ENCODE measurements at regions of chr11 and their contacts with region 1.

Region 1: GRCh38 chr11:130002846-130003716 is 446 bp upstream of the PRDM10 start:
- DNase-seq: peak; percentile 95
- ATAC-seq: peak; percentile 85
- H3K4me3 ChIP-seq: peak overlapping the region; percentile 84
- H3K27ac ChIP-seq: peak overlapping the region; percentile 100
- H3K4me1 ChIP-seq: 0 out of 2 replicates have a peak, but pooled peaks cover 6% of the 10 kb centered on the region
- H3K27me3 ChIP-seq: no peaks in the 10 kb centered on the region
- CTCF ChIP-seq: no peak
- EP300 ChIP-seq: peak; percentile 35 to 36; a peak in 2 of 4 replicates
- POLR2A ChIP-seq: peak; percentile 90
- RAD21 ChIP-seq: no peak

Region 2: GRCh38 chr11:129273944-129274711 is 729.0 kb before region 1 on chr11:
- CTCF ChIA-PET with region 1: no interaction called
- POLR2A ChIA-PET with region 1: no interaction called
- RAD21 ChIA-PET with region 1: no interaction called
- SMC1A ChIA-PET with region 1: no interaction called
- in situ Hi-C with region 1: no loop called
- intact Hi-C with region 1: loop called (anchors 5 kb)
- DNase-seq: no peak
- ATAC-seq: peak; percentile 61
- H3K4me3 ChIP-seq: no peak overlapping the region
- H3K27ac ChIP-seq: no peak overlapping the region
- H3K4me1 ChIP-seq: no peaks in the 10 kb centered on the region
- H3K27me3 ChIP-seq: no peaks in the 10 kb centered on the region
- CTCF ChIP-seq: no peak
- EP300 ChIP-seq: no peak
- POLR2A ChIP-seq: no peak
- RAD21 ChIP-seq: no peak

Region 3: DNA sequence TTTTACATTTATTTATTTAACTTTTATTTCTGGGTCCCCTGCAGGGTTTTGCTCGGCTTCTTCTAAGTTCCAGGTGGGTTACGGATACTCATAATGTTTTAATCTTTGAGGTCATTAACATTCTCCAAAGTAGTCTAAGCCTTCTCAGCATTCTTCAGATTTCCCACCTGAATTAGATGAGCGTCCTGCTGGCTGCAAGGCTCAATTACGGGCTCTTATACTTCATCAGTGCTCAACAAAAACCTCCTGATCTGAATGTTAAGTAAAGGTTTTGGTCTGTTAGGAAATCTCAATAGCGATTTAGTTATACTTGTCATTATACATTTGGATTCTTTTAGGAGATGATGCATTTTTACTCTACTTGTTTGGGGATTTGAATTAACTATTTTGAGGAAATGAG is 80.4 kb before region 1 on chr11:
- CTCF ChIA-PET with region 1: interaction called, 9 read pairs
- POLR2A ChIA-PET with region 1: interaction called, 4 read pairs
- RAD21 ChIA-PET with region 1: interaction called, 4 read pairs
- SMC1A ChIA-PET with region 1: interaction called, 7 read pairs
- in situ Hi-C with region 1: no loop called
- intact Hi-C with region 1: loop called (anchors 5 kb)
- DNase-seq: no peak
- ATAC-seq: no peak
- H3K4me3 ChIP-seq: no peak overlapping the region
- H3K27ac ChIP-seq: no peak overlapping the region
- H3K4me1 ChIP-seq: no peaks in the 10 kb centered on the region
- H3K27me3 ChIP-seq: no peaks in the 10 kb centered on the region
- CTCF ChIP-seq: no peak
- EP300 ChIP-seq: no peak
- POLR2A ChIP-seq: no peak
- RAD21 ChIP-seq: no peak

Region 4: DNA sequence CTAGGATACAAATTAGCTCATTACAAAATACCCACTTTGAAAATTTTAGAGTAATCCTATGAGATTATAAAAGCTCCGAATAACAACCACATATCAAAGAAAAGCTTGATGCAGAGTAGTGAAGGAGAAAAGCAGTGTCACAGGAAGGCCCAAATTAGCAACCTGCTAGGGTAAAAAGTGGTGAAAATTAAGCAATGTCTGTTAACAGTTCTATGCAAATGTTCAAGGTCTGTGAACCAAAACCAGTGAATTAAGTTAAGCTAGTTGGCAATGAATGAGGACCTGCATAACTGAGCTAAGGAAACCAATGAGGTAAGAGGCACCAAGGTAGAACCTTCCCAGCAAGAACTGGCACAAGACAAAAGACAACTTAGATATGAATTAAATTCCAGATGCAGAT is 30.0 kb before region 1 on chr11:
- CTCF ChIA-PET with region 1: interaction called, 9 read pairs
- POLR2A ChIA-PET with region 1: interaction called, 10 read pairs
- RAD21 ChIA-PET with region 1: interaction called, 14 read pairs
- SMC1A ChIA-PET with region 1: interaction called, 18 read pairs
- in situ Hi-C with region 1: no loop called
- intact Hi-C with region 1: no loop called
- DNase-seq: no peak
- ATAC-seq: peak; percentile 73
- H3K4me3 ChIP-seq: no peak overlapping the region
- H3K27ac ChIP-seq: no peak overlapping the region; the same call in 1 of the 2 replicates
- H3K4me1 ChIP-seq: peaks cover 6% of the 10 kb centered on the region; the same call in 1 of the 2 replicates
- H3K27me3 ChIP-seq: no peaks in the 10 kb centered on the region
- CTCF ChIP-seq: no peak
- EP300 ChIP-seq: no peak
- POLR2A ChIP-seq: no peak
- RAD21 ChIP-seq: no peak

Region 5: GRCh38 chr11:130022798-130023583 is 19.9 kb after region 1 on chr11:
- CTCF ChIA-PET with region 1: no interaction called
- POLR2A ChIA-PET with region 1: no interaction called
- RAD21 ChIA-PET with region 1: no interaction called
- SMC1A ChIA-PET with region 1: no interaction called
- in situ Hi-C with region 1: no loop called
- intact Hi-C with region 1: loop called (anchors 1 kb)
- DNase-seq: peak; percentile 88
- ATAC-seq: peak; percentile 98
- H3K4me3 ChIP-seq: no peak overlapping the region
- H3K27ac ChIP-seq: no peak overlapping the region
- H3K4me1 ChIP-seq: peaks cover 5% of the 10 kb centered on the region
- H3K27me3 ChIP-seq: peaks cover 0 to 1% of the 10 kb centered on the region in 2 experiments; a peak in 2 of 4 replicates
- CTCF ChIP-seq: no peak
- EP300 ChIP-seq: no peak
- POLR2A ChIP-seq: no peak
- RAD21 ChIP-seq: no peak

Region 6: DNA sequence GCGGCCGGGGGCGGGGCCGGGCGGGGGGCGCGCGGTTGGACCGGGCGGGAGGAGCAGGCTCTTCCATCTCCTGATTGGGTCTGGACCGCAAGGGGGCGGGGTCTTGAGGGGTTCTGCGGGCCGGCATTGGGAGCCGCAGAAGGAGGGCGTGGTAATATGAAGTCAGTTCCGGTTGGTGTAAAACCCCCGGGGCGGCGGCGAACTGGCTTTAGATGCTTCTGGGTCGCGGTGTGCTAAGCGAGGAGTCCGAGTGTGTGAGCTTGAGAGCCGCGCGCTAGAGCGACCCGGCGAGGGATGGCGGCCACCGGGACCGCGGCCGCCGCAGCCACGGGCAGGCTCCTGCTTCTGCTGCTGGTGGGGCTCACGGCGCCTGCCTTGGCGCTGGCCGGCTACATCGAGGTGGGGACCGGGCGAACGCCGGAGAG is 66.6 kb after region 1 on chr11 and contains the start of gene APLP2:
- CTCF ChIA-PET with region 1: interaction called, 4 read pairs
- POLR2A ChIA-PET with region 1: interaction called, 11 read pairs
- RAD21 ChIA-PET with region 1: interaction called, 10 read pairs
- SMC1A ChIA-PET with region 1: interaction called, 8 read pairs
- in situ Hi-C with region 1: no loop called
- intact Hi-C with region 1: loop called (anchors 1 kb)
- DNase-seq: peak; percentile 75
- ATAC-seq: peak; percentile 93
- H3K4me3 ChIP-seq: peak within 1 kb of the TSS; percentile 76
- H3K27ac ChIP-seq: no peak within 1 kb of the TSS
- H3K4me1 ChIP-seq: no peaks in the 10 kb centered on the region
- H3K27me3 ChIP-seq: peaks cover 0 to 4% of the 10 kb centered on the region in 2 experiments; a peak in 1 of 4 replicates
- CTCF ChIP-seq: no peak
- EP300 ChIP-seq: no peak
- POLR2A ChIP-seq: peak; percentile 97
- RAD21 ChIP-seq: no peak
- polyA plus RNA-seq, gene APLP2: 2.3 to 4.6 TPM

Region 7: GRCh38 chr11:130118636-130119387 is 115.7 kb after region 1 on chr11:
- CTCF ChIA-PET with region 1: interaction called, 4 read pairs
- POLR2A ChIA-PET with region 1: no interaction called
- RAD21 ChIA-PET with region 1: interaction called, 7 read pairs
- SMC1A ChIA-PET with region 1: interaction called, 4 read pairs
- in situ Hi-C with region 1: no loop called
- intact Hi-C with region 1: loop called (anchors 5 kb)
- DNase-seq: peak; percentile 38
- ATAC-seq: peak; percentile 79
- H3K4me3 ChIP-seq: peak overlapping the region; percentile 29; the same call in 1 of the 2 replicates
- H3K27ac ChIP-seq: peak overlapping the region; percentile 40; the same call in 1 of the 2 replicates
- H3K4me1 ChIP-seq: peaks cover 20% of the 10 kb centered on the region
- H3K27me3 ChIP-seq: no peaks in the 10 kb centered on the region
- CTCF ChIP-seq: no peak
- EP300 ChIP-seq: no peak
- POLR2A ChIP-seq: no peak
- RAD21 ChIP-seq: no peak

Region 8: DNA sequence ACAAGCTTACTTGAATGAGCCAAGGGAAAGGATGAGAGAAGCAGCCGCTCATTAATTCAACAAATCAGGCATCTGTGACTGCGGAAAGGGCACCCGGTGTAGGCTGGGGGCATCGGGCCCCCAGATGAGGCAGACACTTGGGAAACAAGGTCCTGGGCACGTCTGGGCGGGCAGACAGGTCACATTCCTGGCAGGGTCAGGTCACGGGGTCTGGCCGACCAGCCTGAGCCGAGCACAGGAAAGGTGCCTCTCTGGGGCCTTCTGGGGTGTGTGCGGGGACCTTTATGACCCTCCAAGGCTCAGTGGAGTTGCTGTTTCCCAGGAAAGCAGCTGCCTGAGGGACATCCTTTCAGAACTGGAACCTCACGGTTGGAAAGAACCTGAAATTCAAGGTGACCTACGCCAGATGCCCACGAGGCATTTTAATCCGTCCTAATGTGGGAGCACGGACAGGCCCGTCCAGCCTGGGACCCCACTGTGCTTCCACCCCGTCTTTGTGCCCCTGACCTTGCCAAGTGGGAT is 213.6 kb after region 1 on chr11:
- CTCF ChIA-PET with region 1: no interaction called
- POLR2A ChIA-PET with region 1: no interaction called
- RAD21 ChIA-PET with region 1: no interaction called
- SMC1A ChIA-PET with region 1: no interaction called
- in situ Hi-C with region 1: no loop called
- intact Hi-C with region 1: no loop called
- DNase-seq: no peak
- ATAC-seq: no peak
- H3K4me3 ChIP-seq: no peak overlapping the region
- H3K27ac ChIP-seq: no peak overlapping the region
- H3K4me1 ChIP-seq: no peaks in the 10 kb centered on the region
- H3K27me3 ChIP-seq: no peaks in the 10 kb centered on the region
- CTCF ChIP-seq: no peak
- EP300 ChIP-seq: no peak
- POLR2A ChIP-seq: no peak
- RAD21 ChIP-seq: no peak

Region 9: GRCh38 chr11:130827451-130828377 is 824.6 kb after region 1 on chr11:
- CTCF ChIA-PET with region 1: no interaction called
- POLR2A ChIA-PET with region 1: no interaction called
- RAD21 ChIA-PET with region 1: no interaction called
- SMC1A ChIA-PET with region 1: no interaction called
- in situ Hi-C with region 1: no loop called
- intact Hi-C with region 1: no loop called
- DNase-seq: no peak
- ATAC-seq: peak; percentile 73
- H3K4me3 ChIP-seq: no peak overlapping the region
- H3K27ac ChIP-seq: no peak overlapping the region
- H3K4me1 ChIP-seq: no peaks in the 10 kb centered on the region
- H3K27me3 ChIP-seq: peaks cover 0 to 5% of the 10 kb centered on the region in 2 experiments; a peak in 2 of 4 replicates
- CTCF ChIP-seq: peak; percentile 30 to 45 (median 34); a peak in 4 of 6 replicates
- EP300 ChIP-seq: no peak
- POLR2A ChIP-seq: no peak
- RAD21 ChIP-seq: peak; percentile 50

Measured in GM12878 (cell line).